Mammary epithelial cell (primary cell): ENCODE measurements at regions of chr3 and their contacts with region 1.

Region 1: GRCh38 chr3:66582721-66583423 is 82.0 kb upstream of the LRIG1 start:
- DNase-seq: no peak
- H3K4me3 ChIP-seq: no peak overlapping the region
- H3K27ac ChIP-seq: no peak overlapping the region
- H3K4me1 ChIP-seq: peaks cover 6% of the 10 kb centered on the region
- H3K27me3 ChIP-seq: no peaks in the 10 kb centered on the region
- CTCF ChIP-seq: no peak

Region 2: GRCh38 chr3:66625505-66626216 is 42.8 kb after region 1 on chr3:
- CTCF ChIA-PET with region 1: no interaction called
- dilution Hi-C with region 1: no loop called
- in situ Hi-C with region 1: no loop called
- intact Hi-C with region 1: no loop called
- DNase-seq: no peak
- H3K4me3 ChIP-seq: no peak overlapping the region
- H3K27ac ChIP-seq: no peak overlapping the region
- H3K4me1 ChIP-seq: no peaks in the 10 kb centered on the region
- H3K27me3 ChIP-seq: no peaks in the 10 kb centered on the region
- CTCF ChIP-seq: no peak

Region 3: DNA sequence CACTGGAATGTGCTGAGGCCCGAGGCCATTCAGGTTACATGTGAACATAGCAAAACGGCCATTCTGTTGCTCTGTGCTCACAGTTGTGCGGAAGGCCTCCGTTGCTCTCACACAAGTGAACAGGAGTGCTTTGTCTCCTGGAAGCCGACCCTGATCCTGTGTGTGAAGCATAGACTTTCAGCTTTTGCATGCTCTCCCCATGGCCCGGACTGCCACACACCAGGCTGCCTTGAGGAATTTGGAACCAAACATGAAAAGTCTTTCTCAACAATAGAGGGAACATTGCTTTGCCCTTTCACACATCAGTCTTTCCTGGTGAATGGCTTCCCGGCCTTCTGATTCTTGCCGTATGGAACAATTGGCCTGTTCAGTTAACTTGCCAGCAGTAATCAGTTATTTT is 72.8 kb after region 1 on chr3:
- CTCF ChIA-PET with region 1: no interaction called
- dilution Hi-C with region 1: loop called (anchors 5 kb)
- in situ Hi-C with region 1: no loop called
- intact Hi-C with region 1: no loop called
- DNase-seq: no peak
- H3K4me3 ChIP-seq: no peak overlapping the region
- H3K27ac ChIP-seq: no peak overlapping the region
- H3K4me1 ChIP-seq: no peaks in the 10 kb centered on the region
- H3K27me3 ChIP-seq: no peaks in the 10 kb centered on the region
- CTCF ChIP-seq: no peak